ENCODE measurements at regions of chr19 and their contacts with region 1.

Region 1: GRCh38 chr19:28466107-28467045 is 746.6 kb downstream of the UQCRFS1 start:
- DNase-seq: peak; percentile 59 to 83 (median 74)
- H3K4me3 ChIP-seq: no peak overlapping the region
- H3K27ac ChIP-seq: no peak overlapping the region
- H3K4me1 ChIP-seq: no peaks in the 10 kb centered on the region
- H3K27me3 ChIP-seq: peaks cover 6% of the 10 kb centered on the region
- CTCF ChIP-seq: peak; percentile 58 to 91 (median 74)
- POLR2A ChIP-seq: no peak

Region 2: GRCh38 chr19:28508666-28509065 is 42.3 kb after region 1 on chr19:
- intact Hi-C with region 1: no loop called
- DNase-seq: no peak
- H3K4me3 ChIP-seq: no peak overlapping the region
- H3K27ac ChIP-seq: no peak overlapping the region
- H3K4me1 ChIP-seq: no peaks in the 10 kb centered on the region
- H3K27me3 ChIP-seq: no peaks in the 10 kb centered on the region
- CTCF ChIP-seq: no peak
- POLR2A ChIP-seq: no peak

Region 3: GRCh38 chr19:28633319-28634018 is 167.1 kb after region 1 on chr19:
- intact Hi-C with region 1: loop called in 1 of 2 experiments (anchors 10 kb)
- DNase-seq: peak; percentile 23 to 70 (median 54)
- H3K4me3 ChIP-seq: no peak overlapping the region
- H3K27ac ChIP-seq: no peak overlapping the region
- H3K4me1 ChIP-seq: no peaks in the 10 kb centered on the region
- H3K27me3 ChIP-seq: no peaks in the 10 kb centered on the region
- CTCF ChIP-seq: peak; percentile 61 to 81 (median 75)
- POLR2A ChIP-seq: no peak

Region 4: GRCh38 chr19:28710278-28710677 is 243.9 kb after region 1 on chr19:
- intact Hi-C with region 1: loop called in 1 of 2 experiments (anchors 5 kb)
- DNase-seq: no peak
- H3K4me3 ChIP-seq: no peak overlapping the region
- H3K27ac ChIP-seq: no peak overlapping the region
- H3K4me1 ChIP-seq: no peaks in the 10 kb centered on the region
- H3K27me3 ChIP-seq: no peaks in the 10 kb centered on the region
- CTCF ChIP-seq: peak; percentile 59 to 84 (median 73)
- POLR2A ChIP-seq: no peak

Region 5: DNA sequence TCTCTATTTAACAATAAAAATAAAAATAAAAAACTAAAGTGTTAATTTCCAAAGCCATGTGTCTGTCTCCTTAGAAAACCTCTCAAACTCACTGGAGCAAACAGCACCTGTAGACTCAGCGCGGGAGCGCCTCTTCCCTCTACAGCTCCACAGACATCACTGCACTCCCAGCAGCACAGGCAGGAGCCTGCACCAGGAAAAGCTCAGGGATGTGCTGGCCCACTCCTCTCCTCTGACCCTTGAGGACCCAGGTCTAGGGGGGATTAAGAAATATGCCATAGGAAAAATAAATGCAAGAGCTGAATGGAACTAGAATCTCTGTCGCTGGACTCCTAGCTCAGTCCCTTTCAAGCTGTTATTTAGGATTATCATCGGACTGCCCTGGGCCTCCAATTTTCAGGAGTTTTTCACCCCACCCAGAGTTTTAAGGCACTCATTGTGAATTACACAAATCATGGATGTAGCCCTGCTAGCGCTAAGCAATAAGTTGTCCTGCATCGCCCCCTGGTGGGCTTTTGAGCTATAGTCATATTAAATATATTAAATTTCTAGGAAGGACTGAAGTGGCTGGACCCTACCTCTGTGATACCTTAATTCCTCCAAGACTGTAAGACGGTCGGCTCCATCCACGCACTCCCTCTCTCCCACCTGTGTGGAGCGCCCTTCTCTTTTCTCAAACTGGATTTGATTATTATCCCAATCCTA is 412.6 kb after region 1 on chr19:
- intact Hi-C with region 1: loop called in 1 of 2 experiments (anchors 5 kb)
- DNase-seq: peak; percentile 59 to 85 (median 73)
- H3K4me3 ChIP-seq: no peak overlapping the region
- H3K27ac ChIP-seq: no peak overlapping the region
- H3K4me1 ChIP-seq: no peaks in the 10 kb centered on the region
- H3K27me3 ChIP-seq: no peaks in the 10 kb centered on the region
- CTCF ChIP-seq: peak; percentile 64 to 79 (median 72)
- POLR2A ChIP-seq: no peak

Measured in adrenal gland (tissue), 19 donors.